H1 (cell line): ENCODE measurements at regions of chr17 and their contacts with region 1.

Region 1: GRCh38 chr17:27654654-27655524 is 23.9 kb downstream of the LGALS9 start:
- DNase-seq: peak; percentile 75 to 93
- H3K4me3 ChIP-seq: no peak overlapping the region
- H3K27ac ChIP-seq: no peak overlapping the region
- H3K4me1 ChIP-seq: no peaks in the 10 kb centered on the region
- H3K27me3 ChIP-seq: no peaks in the 10 kb centered on the region
- CTCF ChIP-seq: peak; percentile 70 to 89 (median 84)
- EP300 ChIP-seq: no peak; a peak in 1 of 3 replicates
- POLR2A ChIP-seq: no peak
- RAD21 ChIP-seq: peak; percentile 57 to 62

Region 2: GRCh38 chr17:27381007-27381501 is 273.8 kb before region 1 on chr17:
- CTCF ChIA-PET with region 1: interaction called, 12 read pairs
- POLR2A ChIA-PET with region 1: no interaction called
- DNase-seq: peak; percentile 68 to 97
- H3K4me3 ChIP-seq: no peak overlapping the region
- H3K27ac ChIP-seq: no peak overlapping the region
- H3K4me1 ChIP-seq: no peaks in the 10 kb centered on the region
- H3K27me3 ChIP-seq: no peaks in the 10 kb centered on the region
- CTCF ChIP-seq: peak; percentile 100
- EP300 ChIP-seq: peak in 1 of 2 experiments; percentile 46; a peak in 1 of 3 replicates
- POLR2A ChIP-seq: no peak
- RAD21 ChIP-seq: peak; percentile 78 to 82

Region 3: DNA sequence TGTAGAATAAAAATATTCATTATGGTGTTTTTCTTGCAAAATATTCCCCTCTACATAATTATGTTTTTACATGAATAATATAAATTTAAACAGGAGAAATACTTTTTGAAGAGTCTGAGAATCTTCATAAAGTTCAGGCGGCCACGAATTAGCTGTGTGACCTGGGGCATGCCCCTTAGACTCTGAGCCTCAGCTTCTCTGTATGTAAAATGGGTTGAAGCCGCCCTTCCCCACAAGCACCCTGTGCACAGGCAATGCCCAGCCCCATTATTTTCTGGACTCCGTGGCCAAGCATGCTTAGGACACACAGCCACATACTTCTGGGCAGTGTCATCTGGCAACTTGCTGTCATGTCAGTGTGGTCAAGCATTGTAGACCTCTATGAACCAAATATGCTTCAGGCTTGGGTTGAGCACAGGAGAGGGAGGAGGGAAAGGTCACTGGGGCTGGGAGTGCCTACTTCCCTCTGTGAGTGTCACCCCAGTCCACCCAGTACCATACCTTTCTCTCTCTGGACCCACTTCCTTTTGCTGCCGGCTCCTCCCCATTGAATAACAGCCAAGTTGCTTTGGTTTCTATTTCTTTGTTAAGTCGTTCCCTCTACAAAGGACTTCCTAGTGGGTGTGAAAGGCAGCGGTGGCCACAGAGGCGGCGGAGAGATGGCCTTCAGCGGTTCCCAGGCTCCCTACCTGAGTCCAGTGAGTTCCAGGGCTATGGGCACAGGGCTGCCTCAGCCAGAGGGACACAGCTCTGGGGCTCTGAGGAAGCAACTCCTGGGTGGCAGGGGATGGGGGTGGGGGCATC is 24.1 kb before region 1 on chr17 and contains the start of gene LGALS9:
- CTCF ChIA-PET with region 1: interaction called, 65 read pairs
- POLR2A ChIA-PET with region 1: no interaction called
- DNase-seq: no peak
- H3K4me3 ChIP-seq: no peak within 1 kb of the TSS
- H3K27ac ChIP-seq: no peak within 1 kb of the TSS
- H3K4me1 ChIP-seq: peaks cover 0 to 4% (median 0%) of the 10 kb centered on the region in 4 experiments; a peak in 2 of 7 replicates
- H3K27me3 ChIP-seq: no peaks in the 10 kb centered on the region
- CTCF ChIP-seq: no peak
- EP300 ChIP-seq: no peak
- POLR2A ChIP-seq: no peak
- RAD21 ChIP-seq: no peak
- total RNA-seq, gene LGALS9: 0.77 and 1.7 TPM in 2 replicates

Region 4: GRCh38 chr17:27674335-27674734 is 19.4 kb after region 1 on chr17:
- CTCF ChIA-PET with region 1: interaction called, 20 read pairs
- POLR2A ChIA-PET with region 1: no interaction called
- DNase-seq: peak in 1 of 2 experiments; percentile 33
- H3K4me3 ChIP-seq: no peak overlapping the region
- H3K27ac ChIP-seq: no peak overlapping the region
- H3K4me1 ChIP-seq: no peaks in the 10 kb centered on the region; a peak in 1 of 7 replicates
- H3K27me3 ChIP-seq: no peaks in the 10 kb centered on the region
- CTCF ChIP-seq: no peak
- EP300 ChIP-seq: no peak
- POLR2A ChIP-seq: no peak
- RAD21 ChIP-seq: no peak

Region 5: GRCh38 chr17:27692766-27693165 is 37.9 kb after region 1 on chr17:
- CTCF ChIA-PET with region 1: no interaction called
- POLR2A ChIA-PET with region 1: no interaction called
- DNase-seq: no peak
- H3K4me3 ChIP-seq: no peak overlapping the region
- H3K27ac ChIP-seq: no peak overlapping the region
- H3K4me1 ChIP-seq: no peaks in the 10 kb centered on the region
- H3K27me3 ChIP-seq: no peaks in the 10 kb centered on the region
- CTCF ChIP-seq: no peak
- EP300 ChIP-seq: no peak
- POLR2A ChIP-seq: no peak
- RAD21 ChIP-seq: no peak

Region 6: GRCh38 chr17:27760069-27760885 is 105.4 kb after region 1 on chr17:
- CTCF ChIA-PET with region 1: interaction called, 338 read pairs
- POLR2A ChIA-PET with region 1: no interaction called
- DNase-seq: peak; percentile 34 to 96
- H3K4me3 ChIP-seq: no peak overlapping the region
- H3K27ac ChIP-seq: no peak overlapping the region
- H3K4me1 ChIP-seq: no peaks in the 10 kb centered on the region
- H3K27me3 ChIP-seq: no peaks in the 10 kb centered on the region
- CTCF ChIP-seq: peak; percentile 77 to 80 (median 78)
- EP300 ChIP-seq: no peak
- POLR2A ChIP-seq: no peak
- RAD21 ChIP-seq: peak; percentile 75